Lower leg skin (tissue), 4 donors: ENCODE measurements at regions of chr3 and their contacts with region 1.

Region 1: GRCh38 chr3:16253601-16254000 is 11.1 kb downstream of the DPH3 start:
- DNase-seq: peak in 1 of 2 donors; percentile 58
- H3K4me3 ChIP-seq: no peak overlapping the region
- CTCF ChIP-seq: no peak
- POLR2A ChIP-seq: no peak

Region 2: DNA sequence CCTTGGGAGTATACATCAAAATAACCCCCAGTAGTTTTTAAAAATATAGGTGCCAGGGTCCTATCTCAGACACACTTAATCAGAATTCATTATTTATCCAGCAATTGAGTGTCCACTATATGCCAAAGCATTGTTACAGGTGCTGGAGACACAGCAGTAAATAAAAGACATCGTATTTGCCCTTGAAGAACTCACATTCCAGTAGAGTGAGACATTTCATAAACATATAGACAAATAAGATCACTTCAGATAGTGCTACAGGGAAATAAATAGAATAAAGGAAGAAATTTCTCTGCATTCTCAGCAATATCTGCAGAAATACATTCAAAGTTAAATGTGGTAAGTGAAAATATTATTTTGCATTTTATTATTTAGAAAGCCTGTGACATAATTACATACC is 421.7 kb before region 1 on chr3:
- intact Hi-C with region 1: loop called (anchors 10 kb)
- DNase-seq: no peak
- H3K4me3 ChIP-seq: no peak overlapping the region
- CTCF ChIP-seq: no peak
- POLR2A ChIP-seq: no peak